ENCODE measurements at regions of chr16 and their contacts with region 1.

Region 1: GRCh38 chr16:50273681-50274325 is 7.5 kb downstream of the ADCY7 start:
- DNase-seq: peak; percentile 82
- H3K4me3 Mint-ChIP-seq: peak overlapping the region; percentile 99
- H3K27ac Mint-ChIP-seq: peak overlapping the region; percentile 99
- H3K4me1 Mint-ChIP-seq: peaks cover 83% of the 10 kb centered on the region
- H3K27me3 Mint-ChIP-seq: no peaks in the 10 kb centered on the region

Region 2: DNA sequence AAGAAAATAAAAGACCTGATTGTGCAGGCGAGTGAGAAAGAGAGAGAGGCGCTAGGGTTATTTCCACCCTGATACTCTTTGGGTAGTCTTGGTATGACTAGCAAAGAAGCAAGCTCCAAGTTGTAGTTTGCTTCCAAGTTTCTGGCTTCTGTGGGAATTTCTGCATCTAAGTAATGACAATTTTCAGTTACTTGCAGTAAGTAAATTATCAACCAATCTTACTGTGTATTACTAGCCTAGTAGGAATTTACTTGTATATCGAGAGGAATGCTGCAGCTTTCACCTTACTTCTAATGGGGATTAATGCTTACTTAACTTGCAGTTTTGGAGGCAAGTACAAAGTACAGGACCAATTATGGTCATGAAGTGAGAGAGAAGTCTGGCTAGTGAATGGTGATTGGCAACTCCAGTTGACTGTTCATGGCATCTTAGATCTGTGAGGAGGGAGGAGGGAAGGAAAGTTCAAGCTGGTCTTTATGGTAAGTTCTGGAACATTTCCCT is 88.7 kb before region 1 on chr16:
- intact Hi-C with region 1: no loop called
- DNase-seq: no peak
- H3K4me3 Mint-ChIP-seq: no peak overlapping the region
- H3K27ac Mint-ChIP-seq: no peak overlapping the region
- H3K4me1 Mint-ChIP-seq: peaks cover 18% of the 10 kb centered on the region
- H3K27me3 Mint-ChIP-seq: no peaks in the 10 kb centered on the region

Region 3: GRCh38 chr16:50245417-50246298 is 28.1 kb before region 1 on chr16:
- intact Hi-C with region 1: loop called (anchors 1 kb)
- DNase-seq: peak; percentile 87
- H3K4me3 Mint-ChIP-seq: peak overlapping the region; percentile 83
- H3K27ac Mint-ChIP-seq: peak overlapping the region; percentile 79
- H3K4me1 Mint-ChIP-seq: peaks cover 17% of the 10 kb centered on the region
- H3K27me3 Mint-ChIP-seq: peaks cover 14% of the 10 kb centered on the region

Region 4: DNA sequence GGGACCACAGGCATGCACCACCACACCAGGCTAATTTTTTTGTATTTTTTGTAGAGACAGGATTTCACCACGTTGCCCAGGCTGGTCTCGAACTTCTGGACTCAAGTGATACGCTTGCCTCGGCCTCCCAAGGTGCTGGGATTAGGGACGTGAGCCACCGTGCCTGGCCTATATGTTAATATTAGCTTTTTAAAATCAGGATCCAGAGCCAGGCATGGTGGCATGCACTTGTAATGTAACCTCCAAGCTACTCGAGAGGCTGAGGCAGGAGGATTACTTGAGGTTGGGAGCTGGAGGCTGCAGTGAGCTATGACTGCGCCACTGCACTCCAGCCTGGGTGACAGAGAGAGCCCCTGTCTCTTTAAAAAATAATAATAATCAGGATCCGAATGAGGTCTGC is 15.9 kb before region 1 on chr16:
- intact Hi-C with region 1: no loop called
- DNase-seq: no peak
- H3K4me3 Mint-ChIP-seq: no peak overlapping the region
- H3K27ac Mint-ChIP-seq: no peak overlapping the region
- H3K4me1 Mint-ChIP-seq: peaks cover 3% of the 10 kb centered on the region
- H3K27me3 Mint-ChIP-seq: peaks cover 37% of the 10 kb centered on the region

Region 5: DNA sequence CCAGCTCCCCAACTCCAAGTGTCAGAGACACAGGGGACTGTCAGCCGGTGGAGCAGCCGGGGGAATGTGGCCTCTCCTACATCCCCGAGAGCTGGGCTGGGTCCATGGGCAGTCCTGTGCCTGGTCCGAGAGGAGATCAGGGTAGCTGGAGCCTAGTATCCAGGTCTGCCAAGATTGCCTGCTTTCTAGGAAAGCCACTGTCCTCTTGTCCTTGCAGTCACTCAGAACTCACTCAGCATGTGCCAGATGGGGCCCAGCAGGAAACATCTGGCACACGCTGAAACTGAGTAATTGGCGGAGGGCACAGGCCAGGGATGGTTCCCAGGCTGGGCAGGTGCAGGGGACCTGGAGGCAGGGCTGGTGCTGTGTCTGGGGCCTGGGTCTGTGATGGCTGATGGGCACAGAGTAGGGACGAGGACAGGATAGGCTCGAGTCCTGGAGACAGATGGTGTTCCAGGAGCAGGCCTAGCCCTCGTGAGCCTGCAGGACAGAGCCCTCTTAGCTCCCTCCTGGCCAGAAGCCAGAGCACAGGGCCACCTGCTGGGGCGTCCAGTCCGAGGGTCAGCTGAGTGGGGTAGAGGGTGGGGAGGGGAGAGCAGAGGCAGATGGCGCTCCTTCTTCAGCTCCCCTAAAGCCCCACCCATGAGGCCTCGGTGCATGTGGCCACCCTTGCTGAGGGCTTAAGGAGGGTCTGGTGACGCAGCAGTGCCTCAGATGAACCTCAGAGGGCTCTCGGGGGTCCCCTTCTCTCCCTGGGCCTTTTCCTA is 23.7 kb after region 1 on chr16:
- intact Hi-C with region 1: no loop called
- DNase-seq: no peak
- H3K4me3 Mint-ChIP-seq: no peak overlapping the region
- H3K27ac Mint-ChIP-seq: no peak overlapping the region
- H3K4me1 Mint-ChIP-seq: peaks cover 3% of the 10 kb centered on the region
- H3K27me3 Mint-ChIP-seq: no peaks in the 10 kb centered on the region

Region 6: GRCh38 chr16:50313596-50314478 is 40.0 kb after region 1 on chr16:
- intact Hi-C with region 1: loop called (anchors 5 kb)
- DNase-seq: peak; percentile 87
- H3K4me3 Mint-ChIP-seq: peak overlapping the region; percentile 66
- H3K27ac Mint-ChIP-seq: peak overlapping the region; percentile 92
- H3K4me1 Mint-ChIP-seq: peaks cover 22% of the 10 kb centered on the region
- H3K27me3 Mint-ChIP-seq: no peaks in the 10 kb centered on the region

Region 7: GRCh38 chr16:50335196-50335958 is 61.6 kb after region 1 on chr16:
- intact Hi-C with region 1: loop called (anchors 5 kb)
- DNase-seq: peak; percentile 73
- H3K4me3 Mint-ChIP-seq: no peak overlapping the region
- H3K27ac Mint-ChIP-seq: peak overlapping the region; percentile 83
- H3K4me1 Mint-ChIP-seq: peaks cover 26% of the 10 kb centered on the region
- H3K27me3 Mint-ChIP-seq: no peaks in the 10 kb centered on the region

Region 8: DNA sequence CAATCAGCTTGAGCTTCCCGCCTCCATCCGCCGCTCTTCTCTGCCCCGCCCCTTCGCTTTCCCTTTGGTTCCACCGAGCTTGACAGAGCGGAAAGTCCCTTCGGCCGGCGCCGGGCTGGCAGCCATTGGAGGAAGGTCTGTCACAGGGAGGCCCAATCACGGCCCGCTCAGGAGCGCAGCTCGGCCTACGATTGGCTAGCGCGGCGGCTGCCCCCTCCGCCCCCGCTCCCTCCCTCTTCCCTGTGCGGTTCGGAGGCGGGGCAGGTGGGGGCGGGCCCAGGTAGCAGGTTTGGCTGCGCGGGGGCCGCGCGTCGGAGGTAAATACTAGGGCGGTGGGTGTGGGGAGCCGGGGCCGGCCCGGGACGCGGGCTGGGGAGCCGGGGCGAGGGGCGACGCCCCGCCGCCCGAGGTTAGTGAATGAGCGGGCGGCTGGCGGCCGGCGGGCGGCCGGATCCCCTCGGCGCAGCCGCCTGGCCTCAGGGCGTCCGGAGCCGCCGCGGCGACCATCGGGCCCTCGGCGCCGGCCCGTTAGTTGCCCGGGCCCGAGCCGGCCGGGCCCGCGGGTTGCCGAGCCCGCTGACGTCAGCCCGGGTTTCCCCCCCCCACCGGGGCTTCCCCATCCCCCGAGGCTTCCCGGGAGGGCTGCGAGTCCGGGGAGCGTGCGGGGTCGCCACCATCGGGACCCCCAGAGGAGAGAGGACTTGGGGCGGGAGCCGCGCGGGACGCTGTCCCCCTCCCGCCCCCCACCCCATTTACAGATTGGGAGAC is 468.2 kb after region 1 on chr16 and contains the start of gene CYLD:
- intact Hi-C with region 1: loop called (anchors 5 kb)
- DNase-seq: peak; percentile 100
- H3K4me3 Mint-ChIP-seq: peak within 1 kb of the TSS; percentile 95
- H3K27ac Mint-ChIP-seq: peak within 1 kb of the TSS; percentile 96
- H3K4me1 Mint-ChIP-seq: peaks cover 51% of the 10 kb centered on the region
- H3K27me3 Mint-ChIP-seq: no peaks in the 10 kb centered on the region
- total RNA-seq, gene CYLD: 178 TPM in 2 replicates

Measured in activated CD4-positive, alpha-beta T cell treated with anti-CD3 and anti-CD28 coated beads, Interleukin-2, amount 10 ng/mL, durations not matched to agents 24 days and 14 days (primary cell).